ENCODE measurements at regions of chr16 and their contacts with region 1.

Region 1: GRCh38 chr16:57413301-57413730 is 8.7 kb downstream of the CCL17 start:
- DNase-seq: no peak
- H3K4me3 Mint-ChIP-seq: no peak overlapping the region
- H3K27ac Mint-ChIP-seq: no peak overlapping the region
- H3K4me1 Mint-ChIP-seq: peaks cover 39% of the 10 kb centered on the region
- H3K27me3 Mint-ChIP-seq: no peaks in the 10 kb centered on the region
- CTCF ChIP-seq: no peak

Region 2: DNA sequence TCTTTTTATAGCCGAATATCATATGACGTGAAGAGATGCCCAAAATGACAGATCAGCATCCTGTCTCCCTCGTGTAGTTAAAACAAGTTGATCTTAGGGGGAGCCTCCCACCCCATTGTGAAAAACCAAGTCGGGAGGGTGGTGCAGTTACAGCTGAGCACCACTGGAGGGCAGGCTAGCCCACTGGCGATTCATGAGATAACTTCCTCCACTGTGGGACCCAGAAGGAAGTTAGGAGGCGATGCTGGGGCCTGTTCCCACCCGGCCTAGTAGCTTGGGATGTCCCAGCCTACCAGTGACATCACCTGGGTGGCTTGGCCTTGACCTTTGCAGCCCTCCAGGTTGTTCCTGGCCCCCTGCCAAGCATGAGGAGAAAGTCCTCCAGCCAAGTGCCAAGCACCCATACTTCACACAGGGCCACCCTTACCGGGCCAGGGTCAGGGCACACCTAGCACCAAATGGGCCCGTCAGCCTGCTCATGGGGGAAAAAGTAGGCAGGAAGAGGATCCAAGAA is 329.0 kb before region 1 on chr16:
- CTCF ChIA-PET with region 1: no interaction called
- intact Hi-C with region 1: loop called (anchors 5 kb)
- DNase-seq: peak; percentile 76
- H3K4me3 Mint-ChIP-seq: no peak overlapping the region
- H3K27ac Mint-ChIP-seq: no peak overlapping the region
- H3K4me1 Mint-ChIP-seq: no peaks in the 10 kb centered on the region
- H3K27me3 Mint-ChIP-seq: peaks cover 66% of the 10 kb centered on the region
- CTCF ChIP-seq: peak; percentile 94

Region 3: GRCh38 chr16:57185944-57186871 is 227.1 kb before region 1 on chr16 and contains the starts of genes PSME3IP1 and RSPRY1:
- CTCF ChIA-PET with region 1: no interaction called
- intact Hi-C with region 1: loop called (anchors 10 kb)
- DNase-seq: peak; percentile 99
- H3K4me3 Mint-ChIP-seq: peak within 1 kb of the TSS; percentile 93
- H3K27ac Mint-ChIP-seq: peak within 1 kb of the TSS; percentile 87
- H3K4me1 Mint-ChIP-seq: peaks cover 23% of the 10 kb centered on the region
- H3K27me3 Mint-ChIP-seq: no peaks in the 10 kb centered on the region
- CTCF ChIP-seq: no peak
- total RNA-seq, gene PSME3IP1: 171 and 177 TPM in 2 replicates
- total RNA-seq, gene RSPRY1: 43.6 and 47.4 TPM in 2 replicates

Region 4: GRCh38 chr16:57377080-57377841 is 36.1 kb before region 1 on chr16:
- CTCF ChIA-PET with region 1: interaction called, 13 read pairs
- intact Hi-C with region 1: loop called (anchors 5 kb)
- DNase-seq: peak; percentile 71
- H3K4me3 Mint-ChIP-seq: peak overlapping the region; percentile 28
- H3K27ac Mint-ChIP-seq: peak overlapping the region; percentile 93
- H3K4me1 Mint-ChIP-seq: peaks cover 78% of the 10 kb centered on the region
- H3K27me3 Mint-ChIP-seq: no peaks in the 10 kb centered on the region
- CTCF ChIP-seq: peak; percentile 60

Region 5: DNA sequence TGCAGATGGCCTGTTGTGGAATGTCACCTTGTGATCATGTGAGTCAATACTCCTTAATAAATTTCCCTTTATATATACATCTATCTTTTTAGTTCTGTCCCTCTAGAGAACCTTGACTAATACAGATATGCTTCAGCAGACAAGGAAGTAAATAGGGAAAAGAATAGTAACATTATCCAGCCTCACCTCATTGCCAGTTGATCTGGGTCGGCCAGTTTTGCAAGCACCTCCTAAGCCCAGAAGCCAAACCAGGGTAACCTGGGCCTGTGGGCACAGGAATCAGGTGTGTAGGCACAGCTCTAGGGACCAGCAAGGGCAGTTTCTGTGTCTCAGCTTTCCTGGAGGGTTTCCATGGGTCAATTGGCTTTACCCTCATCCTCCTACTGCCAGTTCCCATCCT is 20.6 kb before region 1 on chr16:
- CTCF ChIA-PET with region 1: interaction called, 10 read pairs
- intact Hi-C with region 1: no loop called
- DNase-seq: peak; percentile 82
- H3K4me3 Mint-ChIP-seq: no peak overlapping the region
- H3K27ac Mint-ChIP-seq: peak overlapping the region; percentile 74
- H3K4me1 Mint-ChIP-seq: peaks cover 51% of the 10 kb centered on the region
- H3K27me3 Mint-ChIP-seq: no peaks in the 10 kb centered on the region
- CTCF ChIP-seq: no peak

Region 6: GRCh38 chr16:57519796-57520360 is 106.6 kb after region 1 on chr16:
- CTCF ChIA-PET with region 1: interaction called, 8 read pairs
- intact Hi-C with region 1: loop called (anchors 5 kb)
- DNase-seq: peak; percentile 90
- H3K4me3 Mint-ChIP-seq: no peak overlapping the region
- H3K27ac Mint-ChIP-seq: no peak overlapping the region
- H3K4me1 Mint-ChIP-seq: peaks cover 6% of the 10 kb centered on the region
- H3K27me3 Mint-ChIP-seq: no peaks in the 10 kb centered on the region
- CTCF ChIP-seq: peak; percentile 99

Region 7: DNA sequence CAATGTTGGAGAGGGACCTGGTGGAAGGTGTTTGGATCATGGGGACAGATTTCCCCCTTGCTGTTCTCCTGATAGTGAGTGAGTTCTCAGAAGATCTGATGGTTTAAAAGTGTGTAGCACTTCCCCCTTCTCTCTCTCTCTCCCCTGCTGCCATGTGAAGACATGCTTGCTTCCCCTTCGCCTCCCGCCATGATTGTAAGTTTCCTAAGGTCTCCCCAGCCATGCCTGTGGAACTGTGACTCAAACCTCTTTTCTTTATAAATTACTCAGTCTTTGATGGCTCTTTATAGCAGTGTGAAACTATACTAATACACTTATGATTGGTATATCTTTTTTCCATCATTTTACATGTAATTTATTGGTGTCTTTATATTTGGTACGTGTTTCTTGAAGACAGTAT is 142.5 kb after region 1 on chr16:
- CTCF ChIA-PET with region 1: no interaction called
- intact Hi-C with region 1: no loop called
- DNase-seq: no peak
- H3K4me3 Mint-ChIP-seq: no peak overlapping the region
- H3K27ac Mint-ChIP-seq: no peak overlapping the region
- H3K4me1 Mint-ChIP-seq: no peaks in the 10 kb centered on the region
- H3K27me3 Mint-ChIP-seq: peaks cover 78% of the 10 kb centered on the region
- CTCF ChIP-seq: no peak